Psoas muscle (tissue), 8 donors: ENCODE measurements at regions of chr2 and their contacts with region 1.

Region 1: GRCh38 chr2:61371027-61371426 is 99.9 kb downstream of the USP34 start:
- DNase-seq: no peak
- ATAC-seq: no peak
- H3K4me3 ChIP-seq: no peak overlapping the region
- H3K27ac ChIP-seq: no peak overlapping the region
- H3K4me1 ChIP-seq: no peaks in the 10 kb centered on the region
- H3K27me3 ChIP-seq: no peaks in the 10 kb centered on the region
- CTCF ChIP-seq: no peak

Region 2: DNA sequence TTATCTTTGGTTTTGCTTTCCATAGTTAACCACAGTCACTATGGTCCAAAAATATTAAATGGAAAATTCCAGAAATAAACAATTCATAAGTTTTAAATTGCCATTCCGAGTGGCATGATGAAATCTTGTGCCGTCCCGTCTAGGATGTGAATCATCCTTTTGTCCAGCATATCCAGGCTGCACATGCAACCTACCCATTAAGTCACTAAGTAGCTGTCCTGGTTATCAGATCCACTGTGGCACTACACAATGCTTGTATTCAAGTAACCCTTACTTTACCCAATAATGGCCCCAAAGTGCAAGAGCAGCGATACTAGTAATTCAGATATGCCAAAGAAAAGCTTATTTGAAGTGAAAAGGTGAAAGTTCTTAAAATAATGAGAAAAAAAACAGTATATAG is 89.1 kb after region 1 on chr2:
- intact Hi-C with region 1: loop called (anchors 10 kb)
- DNase-seq: no peak
- ATAC-seq: peak; percentile 61 to 83 (median 78)
- H3K4me3 ChIP-seq: no peak overlapping the region
- H3K27ac ChIP-seq: peak overlapping the region; percentile 58
- H3K4me1 ChIP-seq: peaks cover 60% of the 10 kb centered on the region
- H3K27me3 ChIP-seq: no peaks in the 10 kb centered on the region
- CTCF ChIP-seq: no peak

Region 3: GRCh38 chr2:61970807-61971556 is 600.0 kb after region 1 on chr2:
- intact Hi-C with region 1: no loop called
- DNase-seq: no peak
- ATAC-seq: no peak
- H3K4me3 ChIP-seq: no peak overlapping the region
- H3K27ac ChIP-seq: no peak overlapping the region
- H3K4me1 ChIP-seq: peaks cover 18% of the 10 kb centered on the region
- H3K27me3 ChIP-seq: no peaks in the 10 kb centered on the region
- CTCF ChIP-seq: no peak